Activated B cell treated with CpG ODN at 0.5 μM for 24 hours (primary cell): ENCODE measurements at regions of chr14 and their contacts with region 1.

Region 1: GRCh38 chr14:101707068-101707842 is 54.3 kb upstream of the PPP2R5C start:
- DNase-seq: peak; percentile 30
- ATAC-seq: peak; percentile 70
- H3K4me3 Mint-ChIP-seq: peak overlapping the region; percentile 46
- H3K27ac Mint-ChIP-seq: peak overlapping the region; percentile 31
- H3K4me1 Mint-ChIP-seq: peaks cover 22% of the 10 kb centered on the region
- H3K27me3 Mint-ChIP-seq: peaks cover 3% of the 10 kb centered on the region
- CTCF ChIP-seq: peak; percentile 65

Region 2: DNA sequence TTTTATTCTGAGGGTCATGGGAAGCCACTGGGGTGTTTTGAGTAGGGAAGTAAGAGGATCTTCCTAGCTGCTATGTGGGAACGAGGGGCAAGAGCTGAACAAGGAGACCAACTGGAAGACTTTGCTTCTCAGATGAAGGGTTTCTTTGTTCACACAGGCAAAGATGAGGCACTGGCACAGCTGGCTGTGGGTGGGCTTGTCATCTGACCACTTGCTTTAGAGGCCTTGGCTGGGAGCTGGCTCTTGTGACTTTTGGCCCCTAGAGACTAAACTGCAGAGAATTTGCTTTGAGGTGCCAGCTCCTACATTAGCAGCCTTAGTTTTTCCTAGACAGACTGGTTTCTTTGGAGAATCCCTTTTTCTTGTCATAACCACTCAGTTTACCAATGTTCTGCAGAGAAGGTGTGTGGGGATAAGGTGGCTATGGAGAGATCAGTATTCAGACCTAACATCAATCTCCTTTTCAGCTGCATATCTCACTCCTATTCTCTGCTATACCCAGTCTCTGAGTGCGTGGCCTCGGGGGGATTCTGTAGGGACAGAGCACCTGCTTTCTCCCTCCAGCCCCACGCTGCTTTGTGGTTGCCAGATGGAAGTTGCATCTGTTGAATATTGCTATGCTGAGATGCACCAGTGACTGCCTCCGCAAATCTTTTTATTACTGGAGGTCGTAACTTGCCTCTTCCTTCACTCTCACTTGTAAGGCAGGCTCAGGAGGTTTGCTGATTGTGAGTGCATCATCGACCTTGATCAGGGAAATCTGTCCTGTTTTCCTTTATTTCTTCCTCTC is 66.9 kb after region 1 on chr14:
- CTCF ChIA-PET with region 1: interaction called, 19 read pairs
- POLR2A ChIA-PET with region 1: interaction called, 8 read pairs
- intact Hi-C with region 1: loop called (anchors 1 kb)
- DNase-seq: peak; percentile 42
- ATAC-seq: peak; percentile 79
- H3K4me3 Mint-ChIP-seq: peak overlapping the region; percentile 49
- H3K27ac Mint-ChIP-seq: peak overlapping the region; percentile 81
- H3K4me1 Mint-ChIP-seq: peaks cover 58% of the 10 kb centered on the region
- H3K27me3 Mint-ChIP-seq: no peaks in the 10 kb centered on the region
- CTCF ChIP-seq: no peak

Region 3: DNA sequence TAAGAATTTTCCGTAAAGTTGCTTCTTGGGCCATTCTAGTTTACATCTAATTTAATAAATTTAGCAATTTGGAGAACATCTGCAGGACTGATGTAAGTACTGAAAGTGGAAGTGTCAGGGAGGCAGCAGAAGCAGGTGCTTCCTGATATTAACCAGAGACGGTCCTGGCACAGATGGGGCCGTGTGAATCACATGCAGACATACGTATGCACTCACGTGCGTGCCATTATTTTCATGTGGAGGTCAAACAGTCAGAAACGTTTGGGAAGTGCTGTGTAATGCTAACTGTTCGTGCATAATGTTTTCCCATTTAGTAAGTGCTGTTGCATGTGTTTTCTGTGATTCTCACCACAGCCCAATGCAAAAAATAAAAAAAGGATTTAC is 169.3 kb after region 1 on chr14:
- CTCF ChIA-PET with region 1: interaction called, 4 read pairs
- POLR2A ChIA-PET with region 1: interaction called, 4 read pairs
- intact Hi-C with region 1: loop called (anchors 10 kb)
- DNase-seq: peak; percentile 60
- ATAC-seq: peak; percentile 84
- H3K4me3 Mint-ChIP-seq: peak overlapping the region; percentile 72
- H3K27ac Mint-ChIP-seq: peak overlapping the region; percentile 96
- H3K4me1 Mint-ChIP-seq: peaks cover 84% of the 10 kb centered on the region
- H3K27me3 Mint-ChIP-seq: no peaks in the 10 kb centered on the region
- CTCF ChIP-seq: no peak

Region 4: DNA sequence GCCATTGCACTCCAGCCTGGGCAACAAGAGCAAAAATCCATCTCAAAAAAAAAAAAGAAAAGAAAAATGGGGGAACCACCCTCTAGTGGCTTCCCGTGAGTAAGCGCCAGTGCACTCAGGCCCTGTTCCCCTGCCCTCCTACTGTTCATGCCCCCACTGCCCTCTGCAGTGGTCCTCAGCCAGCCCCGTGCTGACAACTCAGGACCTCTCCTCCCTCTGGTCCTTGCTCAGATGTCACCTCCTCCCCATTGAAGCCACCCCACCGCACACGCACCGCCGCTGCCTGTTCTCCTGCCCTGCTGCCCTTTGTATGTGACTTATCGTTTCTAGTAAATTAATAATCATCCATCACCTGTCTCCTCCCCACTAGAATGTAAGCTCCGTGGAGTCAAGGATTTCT is 198.4 kb after region 1 on chr14:
- CTCF ChIA-PET with region 1: no interaction called
- POLR2A ChIA-PET with region 1: no interaction called
- intact Hi-C with region 1: loop called (anchors 5 kb)
- DNase-seq: no peak
- ATAC-seq: no peak
- H3K4me3 Mint-ChIP-seq: no peak overlapping the region
- H3K27ac Mint-ChIP-seq: no peak overlapping the region
- H3K4me1 Mint-ChIP-seq: no peaks in the 10 kb centered on the region
- H3K27me3 Mint-ChIP-seq: no peaks in the 10 kb centered on the region
- CTCF ChIP-seq: no peak

Region 5: GRCh38 chr14:101992708-101993107 is 285.5 kb after region 1 on chr14:
- CTCF ChIA-PET with region 1: interaction called, 23 read pairs
- POLR2A ChIA-PET with region 1: interaction called, 9 read pairs
- intact Hi-C with region 1: loop called (anchors 1 kb)
- DNase-seq: peak; percentile 25
- ATAC-seq: peak; percentile 95
- H3K4me3 Mint-ChIP-seq: no peak overlapping the region
- H3K27ac Mint-ChIP-seq: peak overlapping the region; percentile 59
- H3K4me1 Mint-ChIP-seq: peaks cover 23% of the 10 kb centered on the region
- H3K27me3 Mint-ChIP-seq: no peaks in the 10 kb centered on the region
- CTCF ChIP-seq: no peak

Region 6: GRCh38 chr14:102516531-102517415 is 809.5 kb after region 1 on chr14:
- CTCF ChIA-PET with region 1: no interaction called
- POLR2A ChIA-PET with region 1: no interaction called
- intact Hi-C with region 1: loop called (anchors 1 kb)
- DNase-seq: peak; percentile 79
- ATAC-seq: peak; percentile 88
- H3K4me3 Mint-ChIP-seq: peak overlapping the region; percentile 81
- H3K27ac Mint-ChIP-seq: no peak overlapping the region
- H3K4me1 Mint-ChIP-seq: peaks cover 3% of the 10 kb centered on the region
- H3K27me3 Mint-ChIP-seq: peaks cover 3% of the 10 kb centered on the region
- CTCF ChIP-seq: peak; percentile 48